Activated CD4-positive, alpha-beta T cell treated with anti-CD3 and anti-CD28 coated beads, Interleukin-2, amount 10 ng/mL, durations not matched to agents 24 days and 14 days (primary cell): ENCODE measurements at regions of chr3 and their contacts with region 1.

Region 1: DNA sequence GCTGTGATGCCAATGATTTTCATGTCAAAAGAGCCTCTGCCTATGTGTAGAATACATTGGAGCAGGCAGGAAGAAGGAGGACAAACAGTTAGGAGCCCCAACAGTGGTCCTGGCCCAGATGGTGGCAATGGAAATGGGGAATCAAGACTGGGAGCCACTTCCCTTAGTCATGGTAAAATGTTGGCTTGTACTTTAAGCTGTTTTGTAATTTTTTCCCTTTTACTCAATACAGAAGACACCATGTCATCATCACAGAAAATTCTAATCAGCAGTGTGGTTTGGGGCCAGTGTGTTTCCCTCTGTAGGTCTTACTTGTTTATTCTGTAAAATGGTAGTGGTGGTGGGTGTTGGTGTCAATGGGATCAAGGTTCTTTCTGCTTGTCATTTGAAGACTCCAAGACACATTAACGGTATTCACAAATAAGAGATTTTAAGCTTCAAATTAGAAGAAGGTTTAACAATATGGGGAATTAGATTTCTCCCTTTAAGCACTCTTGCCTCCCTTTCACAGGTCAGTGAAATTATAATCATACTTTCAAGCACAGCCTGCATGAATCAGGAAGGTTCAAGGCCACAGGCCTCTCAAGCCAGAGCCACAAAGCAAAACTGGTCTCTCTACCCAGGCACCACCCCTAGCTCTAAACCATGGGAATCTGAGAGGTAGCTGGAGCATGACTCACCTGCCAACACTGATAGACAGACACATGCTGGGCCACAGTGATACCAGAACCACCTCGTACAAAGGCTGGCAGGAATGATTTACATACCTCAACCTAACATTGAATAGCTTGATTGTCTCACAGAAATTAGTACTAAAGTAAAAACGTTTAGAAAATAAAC is 24.9 kb downstream of the SIAH2 start:
- DNase-seq: peak; percentile 72
- H3K4me3 Mint-ChIP-seq: peak overlapping the region; percentile 64
- H3K27ac Mint-ChIP-seq: peak overlapping the region; percentile 99
- H3K4me1 Mint-ChIP-seq: peaks cover 76% of the 10 kb centered on the region
- H3K27me3 Mint-ChIP-seq: no peaks in the 10 kb centered on the region

Region 2: DNA sequence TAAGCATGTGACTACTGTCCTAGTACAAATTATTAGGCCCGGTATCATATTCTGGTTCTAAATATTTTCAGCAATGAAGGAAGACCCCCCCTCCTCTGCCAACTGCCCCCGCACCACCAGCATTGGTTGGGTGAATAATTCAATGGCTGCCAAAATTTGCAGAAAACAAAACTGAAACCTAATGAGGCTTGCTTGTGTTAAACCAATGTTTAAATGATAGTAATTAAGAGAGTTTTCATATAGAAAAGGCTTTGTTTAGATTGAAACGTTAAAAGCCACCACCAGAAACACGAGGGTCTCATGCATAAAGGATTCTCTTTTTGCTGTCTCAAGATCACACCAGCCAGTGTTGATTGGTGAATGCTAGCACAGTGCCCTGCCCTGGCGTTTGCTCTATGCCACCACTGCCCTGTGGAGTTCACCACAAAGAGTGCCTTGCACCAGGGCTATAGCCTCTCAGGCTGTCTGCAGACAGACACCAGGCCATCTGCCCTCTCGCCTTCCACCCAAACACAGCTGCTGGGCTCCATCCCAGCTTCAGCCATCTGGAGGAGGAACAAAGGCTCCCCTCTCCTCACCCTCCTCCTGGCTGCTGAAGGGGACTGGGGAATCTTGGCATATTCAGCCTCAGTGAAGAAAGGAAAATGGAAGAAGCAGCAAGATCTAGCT is 567.1 kb before region 1 on chr3:
- intact Hi-C with region 1: no loop called
- DNase-seq: no peak
- H3K4me3 Mint-ChIP-seq: no peak overlapping the region
- H3K27ac Mint-ChIP-seq: no peak overlapping the region
- H3K4me1 Mint-ChIP-seq: no peaks in the 10 kb centered on the region
- H3K27me3 Mint-ChIP-seq: peaks cover 9% of the 10 kb centered on the region

Region 3: DNA sequence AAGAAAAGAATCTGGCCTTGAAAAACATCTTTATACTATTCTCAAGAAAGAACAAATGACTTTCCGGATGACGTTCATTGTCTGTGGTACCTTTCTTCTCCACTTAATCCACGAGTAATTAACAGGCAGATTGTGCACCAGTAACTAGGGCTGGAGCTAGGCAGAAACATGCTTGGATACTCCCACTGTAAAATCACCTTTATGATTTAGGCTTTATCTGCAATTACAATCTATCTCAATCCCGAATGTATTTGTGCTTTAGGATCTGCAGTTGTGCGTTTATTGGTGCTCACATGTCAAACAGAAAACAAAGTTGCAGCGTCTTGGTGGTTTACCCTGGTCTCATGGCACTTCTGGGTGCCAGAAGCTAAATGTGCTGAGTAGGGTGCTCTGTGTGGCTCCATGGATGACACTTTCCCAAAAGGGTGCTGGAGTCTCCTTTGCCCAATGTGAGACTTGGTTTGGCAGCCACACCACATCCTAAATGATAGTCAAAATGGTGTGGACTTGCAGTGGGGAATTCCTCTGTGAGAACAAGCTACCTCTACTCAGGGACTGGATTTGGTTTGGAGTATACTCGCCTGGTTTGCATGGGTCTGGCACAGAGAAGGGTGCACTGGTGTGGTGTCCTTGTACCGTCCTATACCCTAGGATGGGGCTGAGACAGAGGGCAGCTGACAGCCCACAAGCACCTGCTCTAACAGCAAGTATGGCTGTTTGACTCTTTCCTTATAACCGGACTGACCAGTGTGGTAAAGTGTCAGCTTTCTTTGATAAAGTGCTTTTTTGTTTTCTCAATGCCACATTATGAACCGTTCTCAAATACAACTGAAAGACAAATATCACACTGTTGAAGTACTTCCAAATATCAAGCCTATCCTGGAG is 199.5 kb before region 1 on chr3:
- intact Hi-C with region 1: no loop called
- DNase-seq: no peak
- H3K4me3 Mint-ChIP-seq: no peak overlapping the region
- H3K27ac Mint-ChIP-seq: no peak overlapping the region
- H3K4me1 Mint-ChIP-seq: peaks cover 17% of the 10 kb centered on the region
- H3K27me3 Mint-ChIP-seq: no peaks in the 10 kb centered on the region

Region 4: DNA sequence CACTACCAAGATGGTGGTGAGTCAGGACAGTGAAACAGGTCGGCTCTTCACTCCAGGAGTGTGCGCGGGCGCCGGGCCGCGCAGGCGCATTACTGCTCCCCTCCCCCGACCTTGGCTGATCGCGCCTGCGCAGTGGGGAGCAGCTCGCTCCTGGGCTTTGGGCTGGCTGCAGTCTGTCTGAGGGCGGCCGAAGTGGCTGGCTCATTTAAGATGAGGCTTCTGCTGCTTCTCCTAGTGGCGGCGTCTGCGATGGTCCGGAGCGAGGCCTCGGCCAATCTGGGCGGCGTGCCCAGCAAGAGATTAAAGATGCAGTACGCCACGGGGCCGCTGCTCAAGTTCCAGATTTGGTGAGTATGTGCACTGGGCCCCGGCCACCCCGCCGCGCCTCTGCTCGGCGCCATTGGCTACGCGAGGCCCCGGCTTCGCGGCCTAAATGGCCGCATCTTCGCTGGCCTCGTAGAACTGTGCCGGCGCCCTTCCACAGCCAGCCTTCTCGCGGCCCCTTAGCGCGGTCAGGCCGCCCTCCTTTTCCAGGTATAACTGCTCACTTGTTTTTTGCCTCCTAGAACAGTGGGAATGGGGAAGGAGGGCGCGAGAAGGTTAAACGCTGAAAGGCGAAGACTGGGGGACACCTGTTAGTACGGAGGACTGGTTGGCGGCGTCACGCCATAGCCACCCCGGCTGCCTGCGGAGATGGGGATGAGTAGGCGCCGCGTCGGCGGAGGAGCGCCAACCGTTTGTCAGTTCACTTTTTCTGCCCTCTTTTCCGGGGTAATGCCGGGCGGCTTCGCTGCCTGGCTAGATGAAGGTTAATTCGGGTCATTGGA is 134.7 kb before region 1 on chr3 and contains the start of gene SELENOT:
- intact Hi-C with region 1: loop called (anchors 5 kb)
- DNase-seq: peak; percentile 99
- H3K4me3 Mint-ChIP-seq: peak within 1 kb of the TSS; percentile 98
- H3K27ac Mint-ChIP-seq: peak within 1 kb of the TSS; percentile 99
- H3K4me1 Mint-ChIP-seq: peaks cover 50% of the 10 kb centered on the region
- H3K27me3 Mint-ChIP-seq: no peaks in the 10 kb centered on the region
- total RNA-seq, gene SELENOT: 127 and 135 TPM in 2 replicates

Region 5: GRCh38 chr3:150721285-150722130 is 16.6 kb before region 1 on chr3:
- intact Hi-C with region 1: loop called (anchors 1 kb)
- DNase-seq: peak; percentile 79
- H3K4me3 Mint-ChIP-seq: no peak overlapping the region
- H3K27ac Mint-ChIP-seq: no peak overlapping the region
- H3K4me1 Mint-ChIP-seq: peaks cover 20% of the 10 kb centered on the region
- H3K27me3 Mint-ChIP-seq: no peaks in the 10 kb centered on the region

Region 6: DNA sequence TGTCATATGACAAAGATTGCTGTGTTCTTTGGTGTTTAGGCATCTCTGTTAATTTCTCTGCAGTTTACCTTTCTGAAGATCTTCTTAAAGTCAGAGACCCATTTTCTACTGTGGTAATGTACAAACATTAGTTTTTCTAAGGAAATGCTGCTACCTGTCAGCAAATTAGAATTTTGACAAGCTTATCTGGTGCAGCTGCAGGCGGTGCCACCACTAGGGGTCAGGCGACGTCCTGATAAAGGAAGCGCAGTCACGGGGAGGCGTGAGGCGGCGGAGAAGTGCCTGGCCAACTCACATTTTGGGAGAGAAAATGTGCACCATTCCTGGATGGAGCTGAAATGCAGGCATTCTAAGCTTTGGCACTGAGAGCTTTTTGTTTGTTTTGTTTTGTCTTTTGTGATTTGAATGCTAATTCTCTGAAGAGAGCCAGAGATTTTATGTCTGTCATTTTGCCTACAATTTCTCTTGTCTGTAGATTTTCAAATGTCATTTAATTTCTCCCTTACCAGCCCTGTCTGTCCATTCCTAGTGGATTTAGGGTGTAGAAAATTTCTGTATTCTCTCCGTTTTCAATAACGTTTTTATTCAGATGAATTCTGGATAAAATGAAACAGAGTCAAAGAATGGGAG is 49.8 kb after region 1 on chr3:
- intact Hi-C with region 1: loop called (anchors 1 kb)
- DNase-seq: peak; percentile 92
- H3K4me3 Mint-ChIP-seq: peak overlapping the region; percentile 2
- H3K27ac Mint-ChIP-seq: peak overlapping the region; percentile 39
- H3K4me1 Mint-ChIP-seq: peaks cover 39% of the 10 kb centered on the region
- H3K27me3 Mint-ChIP-seq: peaks cover 4% of the 10 kb centered on the region

Region 7: GRCh38 chr3:151305101-151305750 is 567.1 kb after region 1 on chr3:
- intact Hi-C with region 1: loop called (anchors 1 kb)
- DNase-seq: peak; percentile 65
- H3K4me3 Mint-ChIP-seq: peak overlapping the region; percentile 13
- H3K27ac Mint-ChIP-seq: peak overlapping the region; percentile 80
- H3K4me1 Mint-ChIP-seq: peaks cover 50% of the 10 kb centered on the region
- H3K27me3 Mint-ChIP-seq: peaks cover 2% of the 10 kb centered on the region

Region 8: DNA sequence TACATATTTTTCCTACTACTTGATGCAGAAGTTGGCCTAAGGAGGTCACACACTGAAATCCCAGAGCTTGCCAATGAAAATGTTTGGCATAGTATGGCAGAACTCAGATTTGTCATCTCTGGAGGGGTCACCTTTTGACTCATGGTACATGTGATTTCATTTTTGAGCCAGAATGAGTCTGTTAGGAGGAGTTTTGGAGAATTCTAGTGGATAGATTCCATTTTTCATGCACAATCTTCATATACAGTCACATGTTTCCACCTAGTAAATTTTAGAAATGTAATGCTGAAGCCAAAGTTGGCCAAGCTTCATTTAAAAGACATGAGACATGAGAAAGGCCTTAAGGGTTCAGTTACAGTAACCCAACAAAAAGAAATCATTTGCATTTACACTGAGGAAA is 820.6 kb after region 1 on chr3:
- intact Hi-C with region 1: no loop called
- DNase-seq: no peak
- H3K4me3 Mint-ChIP-seq: no peak overlapping the region
- H3K27ac Mint-ChIP-seq: no peak overlapping the region
- H3K4me1 Mint-ChIP-seq: no peaks in the 10 kb centered on the region
- H3K27me3 Mint-ChIP-seq: peaks cover 8% of the 10 kb centered on the region